B cell (primary cell): ENCODE measurements at regions of chr7 and their contacts with region 1.

Region 1: GRCh38 chr7:135558337-135558767 is 635 bp downstream of the NUP205 start:
- DNase-seq: peak; percentile 83
- ATAC-seq: peak; percentile 63
- H3K4me3 ChIP-seq: peak overlapping the region; percentile 77 to 100 (median 97)
- H3K4me3 Mint-ChIP-seq: no peak overlapping the region
- H3K27ac ChIP-seq: peak overlapping the region; percentile 95 to 98
- H3K27ac Mint-ChIP-seq: no peak overlapping the region
- H3K4me1 ChIP-seq: peaks cover 3 to 6% of the 10 kb centered on the region in 2 donors
- H3K4me1 Mint-ChIP-seq: peaks cover 14% of the 10 kb centered on the region
- H3K27me3 ChIP-seq: no peaks in the 10 kb centered on the region
- H3K27me3 Mint-ChIP-seq: peaks cover 5% of the 10 kb centered on the region
- CTCF ChIP-seq: peak; percentile 70

Region 2: GRCh38 chr7:134126966-134127848 is 1431.1 kb before region 1 on chr7 and contains the start of gene LRGUK:
- CTCF ChIA-PET with region 1: no interaction called
- POLR2A ChIA-PET with region 1: no interaction called
- intact Hi-C with region 1: loop called (anchors 5 kb)
- DNase-seq: peak; percentile 85
- ATAC-seq: peak; percentile 100
- H3K4me3 ChIP-seq: peak within 1 kb of the TSS; percentile 53 to 72 (median 67)
- H3K4me3 Mint-ChIP-seq: peak within 1 kb of the TSS; percentile 91
- H3K27ac ChIP-seq: no peak within 1 kb of the TSS
- H3K27ac Mint-ChIP-seq: no peak within 1 kb of the TSS
- H3K4me1 ChIP-seq: peaks cover 8 to 11% of the 10 kb centered on the region in 2 donors
- H3K4me1 Mint-ChIP-seq: peaks cover 12% of the 10 kb centered on the region
- H3K27me3 ChIP-seq: peaks cover 0 to 5% (median 0%) of the 10 kb centered on the region in 4 experiments
- H3K27me3 Mint-ChIP-seq: peaks cover 27% of the 10 kb centered on the region
- CTCF ChIP-seq: no peak
- total RNA-seq, gene LRGUK: 0.49 and 0.87 TPM in 2 replicates

Region 3: GRCh38 chr7:134986363-134987251 is 571.7 kb before region 1 on chr7 and contains the start of gene AGBL3:
- CTCF ChIA-PET with region 1: no interaction called
- POLR2A ChIA-PET with region 1: no interaction called
- intact Hi-C with region 1: loop called (anchors 2 kb)
- DNase-seq: peak; percentile 95
- ATAC-seq: peak; percentile 86
- H3K4me3 ChIP-seq: peak within 1 kb of the TSS; percentile 69 to 97 (median 94)
- H3K4me3 Mint-ChIP-seq: peak within 1 kb of the TSS; percentile 98
- H3K27ac ChIP-seq: peak within 1 kb of the TSS; percentile 88 to 93
- H3K27ac Mint-ChIP-seq: peak within 1 kb of the TSS; percentile 98
- H3K4me1 ChIP-seq: peaks cover 4 to 5% of the 10 kb centered on the region in 2 donors
- H3K4me1 Mint-ChIP-seq: peaks cover 34% of the 10 kb centered on the region
- H3K27me3 ChIP-seq: no peaks in the 10 kb centered on the region
- H3K27me3 Mint-ChIP-seq: no peaks in the 10 kb centered on the region
- CTCF ChIP-seq: peak; percentile 92
- total RNA-seq, gene AGBL3: 10.9 and 11.1 TPM in 2 replicates

Region 4: GRCh38 chr7:135414850-135415439 is 143.4 kb before region 1 on chr7:
- CTCF ChIA-PET with region 1: no interaction called
- POLR2A ChIA-PET with region 1: no interaction called
- intact Hi-C with region 1: loop called (anchors 1 kb)
- DNase-seq: peak; percentile 35
- ATAC-seq: no peak
- H3K4me3 ChIP-seq: no peak overlapping the region
- H3K4me3 Mint-ChIP-seq: no peak overlapping the region
- H3K27ac ChIP-seq: no peak overlapping the region
- H3K27ac Mint-ChIP-seq: no peak overlapping the region
- H3K4me1 ChIP-seq: no peaks in the 10 kb centered on the region
- H3K4me1 Mint-ChIP-seq: no peaks in the 10 kb centered on the region
- H3K27me3 ChIP-seq: no peaks in the 10 kb centered on the region
- H3K27me3 Mint-ChIP-seq: no peaks in the 10 kb centered on the region
- CTCF ChIP-seq: peak; percentile 41

Region 5: DNA sequence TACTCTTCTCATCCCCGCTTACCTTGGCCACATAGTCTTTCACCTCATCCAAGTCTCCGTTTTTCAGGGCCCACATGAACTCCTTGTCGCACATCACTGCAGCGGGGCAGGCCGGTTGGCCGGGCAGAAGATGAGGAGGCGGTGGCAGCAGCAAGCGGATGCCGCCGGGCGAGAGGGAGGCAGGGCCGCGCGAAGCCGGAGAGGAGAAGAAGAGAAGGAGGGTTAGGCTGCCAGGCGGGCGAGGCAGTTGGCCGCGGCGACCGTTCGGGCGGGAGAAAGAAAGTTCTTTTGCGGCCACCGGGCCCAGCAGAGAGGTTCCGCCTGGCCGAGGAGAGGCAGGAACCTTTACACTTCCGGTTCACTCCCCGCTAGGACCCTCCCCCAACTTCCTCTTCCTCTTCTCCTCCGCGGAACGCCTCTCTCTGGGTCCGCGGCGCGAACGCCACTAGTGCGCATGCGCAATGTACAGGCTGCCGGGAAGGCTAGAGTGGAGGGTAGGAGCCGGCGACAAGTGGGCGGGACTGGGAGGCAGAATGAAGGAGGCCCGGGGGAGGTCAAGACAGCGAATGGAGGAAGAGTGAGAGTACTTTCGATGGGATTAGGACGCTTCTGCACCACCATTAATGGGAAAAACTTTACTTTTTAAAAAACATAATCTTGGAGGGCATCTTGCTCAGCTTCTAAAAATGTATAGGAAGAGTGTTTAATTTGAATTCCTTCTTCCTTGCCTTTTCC is 418.8 kb after region 1 on chr7 and contains the start of gene MTPN:
- CTCF ChIA-PET with region 1: no interaction called
- POLR2A ChIA-PET with region 1: no interaction called
- intact Hi-C with region 1: loop called (anchors 5 kb)
- DNase-seq: peak; percentile 97
- ATAC-seq: peak; percentile 75
- H3K4me3 ChIP-seq: peak within 1 kb of the TSS; percentile 75 to 91 (median 89)
- H3K4me3 Mint-ChIP-seq: peak within 1 kb of the TSS; percentile 89
- H3K27ac ChIP-seq: peak within 1 kb of the TSS; percentile 92 to 94
- H3K27ac Mint-ChIP-seq: peak within 1 kb of the TSS; percentile 95
- H3K4me1 ChIP-seq: peaks cover 64 to 71% of the 10 kb centered on the region in 2 donors
- H3K4me1 Mint-ChIP-seq: peaks cover 86% of the 10 kb centered on the region
- H3K27me3 ChIP-seq: no peaks in the 10 kb centered on the region
- H3K27me3 Mint-ChIP-seq: no peaks in the 10 kb centered on the region
- CTCF ChIP-seq: no peak
- total RNA-seq, gene MTPN: 114 and 115 TPM in 2 replicates